ENCODE measurements at regions of chr7 and their contacts with region 1.

Region 1: DNA sequence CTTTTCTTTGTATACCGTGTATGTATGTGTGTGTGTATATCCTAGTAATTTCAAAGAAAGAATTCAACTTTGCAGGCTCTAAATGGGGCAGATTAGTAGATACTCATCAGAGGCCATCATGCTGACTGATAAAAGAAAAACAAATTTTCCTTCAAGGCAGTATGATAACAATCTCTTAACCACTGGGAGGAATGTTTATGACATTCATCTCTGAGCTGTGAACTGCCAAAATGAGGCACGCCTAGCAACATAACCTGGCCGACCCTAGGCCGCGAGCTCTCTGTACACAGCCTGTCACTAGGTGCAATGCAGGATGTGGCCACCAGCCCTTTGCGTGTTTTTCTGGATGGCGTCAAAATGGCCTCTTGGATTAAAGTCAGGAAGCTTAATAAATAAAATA is 343.7 kb upstream of the GALNT17 start:
- DNase-seq: no peak
- H3K4me3 ChIP-seq: no peak overlapping the region
- H3K27ac ChIP-seq: no peak overlapping the region
- H3K4me1 ChIP-seq: no peaks in the 10 kb centered on the region
- H3K27me3 ChIP-seq: no peaks in the 10 kb centered on the region
- CTCF ChIP-seq: no peak
- EP300 ChIP-seq: no peak
- POLR2A ChIP-seq: no peak

Region 2: DNA sequence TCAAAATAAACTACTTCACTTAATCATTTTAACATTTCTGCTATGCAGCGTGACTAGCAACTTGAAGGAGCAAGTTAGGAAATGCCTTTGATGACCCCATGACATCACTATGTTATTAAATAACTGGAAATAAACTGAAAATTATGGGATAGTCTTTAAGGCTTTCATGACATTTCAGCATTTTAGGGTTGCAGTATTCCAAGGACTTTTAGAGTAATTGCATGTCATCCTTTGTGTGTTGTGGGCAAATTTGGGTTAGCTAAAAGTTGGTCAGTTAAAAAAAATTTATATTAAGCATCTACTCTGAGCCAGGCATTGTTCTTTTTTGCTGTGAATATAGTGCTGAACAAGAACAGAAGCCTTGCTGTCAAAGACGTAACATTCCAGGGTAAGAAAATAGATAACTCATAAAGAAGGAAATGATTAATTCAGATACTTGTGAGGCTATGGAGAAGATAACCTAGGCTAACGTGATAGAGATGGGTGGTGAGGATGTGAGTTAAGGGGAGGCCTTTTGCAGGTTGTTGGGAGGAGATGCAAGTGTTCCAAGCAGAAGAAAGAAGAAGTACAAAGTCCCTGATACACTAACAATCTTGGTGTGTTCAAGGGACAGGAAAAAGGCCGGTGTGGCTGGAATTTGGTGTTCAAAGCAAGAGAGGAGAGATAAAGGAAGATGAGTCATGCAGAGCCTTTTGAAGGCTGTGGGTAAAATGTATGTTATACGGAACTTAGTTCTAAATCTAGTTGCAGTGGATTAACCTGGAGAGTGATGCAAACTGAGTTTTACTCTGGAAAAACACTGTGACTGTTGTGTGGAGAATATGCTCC is 579.8 kb before region 1 on chr7:
- intact Hi-C with region 1: loop called in 1 of 4 experiments (anchors 10 kb)
- DNase-seq: no peak
- H3K4me3 ChIP-seq: no peak overlapping the region
- H3K27ac ChIP-seq: no peak overlapping the region
- H3K4me1 ChIP-seq: no peaks in the 10 kb centered on the region
- H3K27me3 ChIP-seq: no peaks in the 10 kb centered on the region
- CTCF ChIP-seq: no peak
- EP300 ChIP-seq: no peak
- POLR2A ChIP-seq: no peak

Region 3: DNA sequence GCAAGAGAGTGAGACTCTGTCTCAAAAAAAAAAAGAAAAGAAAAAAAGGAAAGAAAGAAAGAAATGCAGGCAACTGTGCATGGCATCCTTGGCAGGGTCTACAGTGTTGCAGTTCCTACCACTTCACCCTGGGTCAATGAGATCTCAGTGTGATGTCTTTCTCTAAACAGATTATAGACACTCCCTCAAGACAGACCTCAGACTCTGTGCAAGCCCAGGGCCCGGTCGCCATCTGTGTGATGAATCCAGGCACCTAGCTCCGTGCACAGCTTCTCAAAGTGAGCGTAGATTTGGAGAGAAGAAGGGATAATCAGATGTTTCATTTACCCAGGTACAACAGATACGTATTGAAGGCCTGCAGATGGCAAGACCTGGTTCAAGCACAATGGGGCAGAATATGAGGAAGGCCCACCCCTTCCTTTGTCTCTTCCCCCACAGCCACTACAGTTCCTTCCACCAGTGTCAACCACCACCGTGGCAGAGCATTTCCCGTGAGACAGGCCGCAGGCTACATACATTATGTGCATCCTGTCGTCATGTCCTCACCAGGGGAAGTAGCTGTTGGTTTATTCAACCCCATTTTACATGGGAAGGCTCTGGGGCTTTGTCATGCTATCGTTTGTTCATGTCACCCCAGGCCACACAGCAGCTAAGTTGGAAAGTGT is 128.0 kb before region 1 on chr7:
- intact Hi-C with region 1: no loop called
- DNase-seq: no peak
- H3K4me3 ChIP-seq: no peak overlapping the region
- H3K27ac ChIP-seq: no peak overlapping the region
- H3K4me1 ChIP-seq: no peaks in the 10 kb centered on the region
- H3K27me3 ChIP-seq: no peaks in the 10 kb centered on the region
- CTCF ChIP-seq: no peak
- EP300 ChIP-seq: no peak
- POLR2A ChIP-seq: no peak

Region 4: GRCh38 chr7:70728872-70729552 is 59.3 kb before region 1 on chr7:
- intact Hi-C with region 1: no loop called
- DNase-seq: no peak
- H3K4me3 ChIP-seq: no peak overlapping the region
- H3K27ac ChIP-seq: no peak overlapping the region
- H3K4me1 ChIP-seq: no peaks in the 10 kb centered on the region
- H3K27me3 ChIP-seq: no peaks in the 10 kb centered on the region
- CTCF ChIP-seq: no peak
- EP300 ChIP-seq: no peak
- POLR2A ChIP-seq: no peak

Region 5: DNA sequence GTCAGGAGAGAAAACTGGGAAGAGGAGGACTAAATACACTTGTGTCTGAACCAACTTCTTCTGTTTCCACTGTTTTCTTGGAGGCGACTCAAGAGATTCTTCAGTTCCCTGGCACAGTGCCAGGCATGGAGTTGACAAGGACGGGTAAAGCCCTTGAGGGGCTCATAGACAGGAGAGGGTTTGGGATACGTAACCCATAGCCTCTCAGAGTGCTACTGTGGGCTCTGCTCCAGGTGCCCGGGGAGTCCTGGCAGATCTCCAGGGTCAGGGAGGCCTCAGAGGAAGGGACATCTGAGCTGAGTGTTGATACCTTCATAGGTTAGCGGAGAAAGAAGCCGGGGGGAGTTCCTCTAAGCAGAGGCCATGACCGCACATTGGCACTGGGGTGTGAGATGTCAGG is 385.7 kb after region 1 on chr7:
- intact Hi-C with region 1: no loop called
- DNase-seq: peak; percentile 28 to 64 (median 51)
- H3K4me3 ChIP-seq: no peak overlapping the region
- H3K27ac ChIP-seq: no peak overlapping the region
- H3K4me1 ChIP-seq: peaks cover 1% of the 10 kb centered on the region
- H3K27me3 ChIP-seq: no peaks in the 10 kb centered on the region
- CTCF ChIP-seq: no peak
- EP300 ChIP-seq: no peak
- POLR2A ChIP-seq: no peak